Activated CD4-positive, alpha-beta memory T cell treated with anti-CD3 and anti-CD28 coated beads for 36 hours (primary cell): ENCODE measurements at regions of chr12 and their contacts with region 1.

Region 1: GRCh38 chr12:11958221-11959091 is 112.3 kb upstream of the BCL2L14 start:
- DNase-seq: peak; percentile 80
- H3K4me3 Mint-ChIP-seq: peak overlapping the region; percentile 50
- H3K27ac Mint-ChIP-seq: peak overlapping the region; percentile 90
- H3K4me1 Mint-ChIP-seq: peaks cover 37% of the 10 kb centered on the region
- H3K27me3 Mint-ChIP-seq: no peaks in the 10 kb centered on the region

Region 2: DNA sequence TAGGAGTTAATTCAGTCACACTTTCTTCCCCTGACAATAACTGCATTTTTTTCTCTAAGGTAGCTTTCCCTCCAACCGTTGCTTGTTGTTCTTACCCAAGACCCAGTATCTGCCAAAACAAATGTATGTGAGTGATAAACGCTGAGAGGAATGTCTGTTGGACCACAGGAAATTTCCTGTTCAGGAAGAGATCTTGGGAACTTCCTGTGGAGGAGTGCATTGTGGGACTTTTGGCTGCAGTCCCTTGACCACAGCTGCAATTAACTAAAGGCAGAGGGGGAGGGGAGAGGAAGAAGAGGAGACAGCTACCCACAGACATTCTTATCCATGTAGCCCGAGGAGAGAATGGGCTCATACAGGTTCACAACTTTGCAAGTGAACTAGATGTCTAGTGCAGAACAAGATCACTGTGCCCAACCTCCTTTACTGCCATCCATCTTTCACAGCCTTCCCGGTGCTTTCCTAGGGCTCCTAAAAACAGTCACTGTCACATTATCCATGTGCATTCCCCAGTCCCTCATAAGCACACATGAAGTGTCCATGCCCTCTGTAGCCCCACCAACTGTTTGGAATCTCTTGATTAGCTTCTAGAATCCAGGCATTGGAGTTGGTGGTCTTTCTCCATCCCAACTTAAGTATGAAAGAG is 159.5 kb before region 1 on chr12:
- CTCF ChIA-PET with region 1: no interaction called
- POLR2A ChIA-PET with region 1: no interaction called
- intact Hi-C with region 1: no loop called
- DNase-seq: no peak
- H3K4me3 Mint-ChIP-seq: no peak overlapping the region
- H3K27ac Mint-ChIP-seq: no peak overlapping the region
- H3K4me1 Mint-ChIP-seq: peaks cover 54% of the 10 kb centered on the region
- H3K27me3 Mint-ChIP-seq: no peaks in the 10 kb centered on the region

Region 3: DNA sequence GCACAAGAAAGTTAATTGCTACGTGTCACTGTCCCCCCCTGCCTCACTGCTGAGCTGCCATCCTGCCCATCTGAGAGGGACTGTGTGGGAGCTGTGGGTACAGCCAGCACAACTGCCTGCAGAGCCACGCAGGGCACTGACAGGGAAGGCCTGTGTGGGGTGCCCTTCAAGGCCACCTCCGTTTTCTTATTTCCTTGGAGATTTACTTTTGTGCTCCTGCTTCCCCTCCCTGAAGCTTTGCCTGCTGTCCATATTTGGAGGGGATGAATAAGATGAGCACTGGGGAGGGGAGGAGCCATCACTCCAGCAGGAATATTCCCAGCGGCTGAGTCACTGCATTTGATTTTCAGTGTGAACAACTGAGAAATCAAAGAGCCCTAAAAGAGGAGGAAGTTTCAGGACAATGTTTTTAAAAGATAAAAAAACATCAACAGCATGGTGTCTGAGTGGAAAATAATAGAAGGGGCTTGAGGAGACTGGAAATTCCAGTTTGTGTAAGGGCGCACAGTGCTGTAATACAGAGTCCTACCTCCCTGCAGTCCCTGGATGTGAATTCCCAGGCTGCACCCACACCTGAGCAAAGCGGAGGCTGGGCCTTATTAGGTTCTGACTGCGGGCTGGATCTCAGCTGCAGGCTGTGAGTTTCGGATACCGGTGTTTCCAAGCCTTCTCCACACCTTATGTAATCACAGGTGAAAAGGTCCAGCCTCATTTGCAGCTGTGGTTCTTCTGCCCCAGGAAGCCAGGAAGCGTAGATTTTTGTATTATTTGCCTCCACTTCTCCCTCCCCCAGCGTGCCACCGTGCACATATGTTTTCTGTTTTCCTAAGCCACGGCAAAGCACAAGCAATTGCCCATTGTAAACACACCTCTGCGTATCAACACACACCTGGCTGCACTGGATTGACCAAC is 80.3 kb before region 1 on chr12:
- CTCF ChIA-PET with region 1: interaction called, 3 read pairs
- POLR2A ChIA-PET with region 1: no interaction called
- intact Hi-C with region 1: loop called (anchors 1 kb)
- DNase-seq: peak; percentile 37
- H3K4me3 Mint-ChIP-seq: no peak overlapping the region
- H3K27ac Mint-ChIP-seq: peak overlapping the region; percentile 55
- H3K4me1 Mint-ChIP-seq: peaks cover 51% of the 10 kb centered on the region
- H3K27me3 Mint-ChIP-seq: no peaks in the 10 kb centered on the region

Region 4: DNA sequence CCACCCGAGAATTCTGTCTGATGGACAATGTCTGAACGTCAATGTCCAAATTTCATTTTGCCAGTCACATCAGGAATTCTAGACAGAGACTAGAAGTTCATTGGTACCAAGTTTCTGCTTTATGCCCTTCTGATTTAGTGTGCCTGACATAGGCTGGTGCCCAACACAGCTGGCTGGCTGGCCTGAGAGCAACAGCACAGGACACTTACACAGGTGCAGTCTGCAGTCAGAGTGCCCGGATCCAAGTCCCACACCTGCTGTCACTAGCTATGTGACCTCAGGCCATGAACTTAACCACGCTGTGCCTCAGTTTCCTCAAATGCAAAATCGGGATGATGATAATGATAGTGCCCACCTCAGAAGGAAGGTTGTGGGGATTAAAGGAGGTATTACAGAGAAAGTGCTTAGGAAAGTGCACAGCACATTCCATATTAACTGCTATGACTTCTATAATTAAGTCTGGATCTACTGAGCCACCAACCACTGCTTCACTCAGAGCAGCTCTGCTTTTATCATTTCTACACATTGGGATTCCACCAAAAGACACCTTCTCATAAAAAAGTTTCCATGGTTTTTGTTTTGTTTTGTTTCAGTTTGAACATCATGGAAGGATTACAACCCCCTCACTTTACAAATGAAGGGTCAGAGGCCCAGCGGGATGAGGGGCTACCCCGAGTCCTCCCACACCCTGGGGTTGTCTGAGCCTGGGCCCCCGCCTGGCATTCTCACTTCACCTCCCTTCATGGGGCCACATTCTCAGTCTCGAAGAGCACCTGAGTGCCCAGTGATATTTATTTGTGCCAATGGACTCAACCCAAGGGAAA is 56.5 kb before region 1 on chr12:
- CTCF ChIA-PET with region 1: no interaction called
- POLR2A ChIA-PET with region 1: interaction called, 6 read pairs
- intact Hi-C with region 1: loop called (anchors 2 kb)
- DNase-seq: peak; percentile 81
- H3K4me3 Mint-ChIP-seq: peak overlapping the region; percentile 50
- H3K27ac Mint-ChIP-seq: peak overlapping the region; percentile 92
- H3K4me1 Mint-ChIP-seq: peaks cover 52% of the 10 kb centered on the region
- H3K27me3 Mint-ChIP-seq: no peaks in the 10 kb centered on the region